ENCODE measurements at regions of chr16 and their contacts with region 1.

Region 1: DNA sequence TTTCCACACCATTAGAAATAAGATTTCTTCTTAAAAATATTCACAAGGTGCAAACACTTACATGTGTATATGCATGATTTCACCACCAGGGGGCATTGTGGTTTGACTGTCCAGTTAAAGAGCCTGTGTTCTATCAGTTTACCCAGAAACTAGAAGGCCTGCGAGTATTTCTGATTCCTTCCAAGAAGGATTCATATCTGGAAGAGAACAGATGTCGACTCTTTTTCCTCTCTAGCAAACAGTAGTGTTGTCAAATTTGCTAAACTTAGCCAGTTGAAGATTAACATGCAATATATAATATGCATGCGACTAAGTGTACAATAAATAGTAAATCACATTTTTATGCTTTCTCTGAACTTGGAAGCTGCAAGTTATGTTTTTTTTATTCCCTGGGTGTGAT is 404.1 kb downstream of the WWOX start:
- DNase-seq: peak; percentile 44 to 64
- H3K4me3 ChIP-seq: no peak overlapping the region
- H3K4me3 Mint-ChIP-seq: no peak overlapping the region
- H3K27ac Mint-ChIP-seq: no peak overlapping the region
- H3K4me1 ChIP-seq: peaks cover 25% of the 10 kb centered on the region
- H3K4me1 Mint-ChIP-seq: peaks cover 26% of the 10 kb centered on the region
- H3K27me3 ChIP-seq: no peaks in the 10 kb centered on the region
- H3K27me3 Mint-ChIP-seq: no peaks in the 10 kb centered on the region
- CTCF ChIP-seq: peak; percentile 70 to 88

Region 2: DNA sequence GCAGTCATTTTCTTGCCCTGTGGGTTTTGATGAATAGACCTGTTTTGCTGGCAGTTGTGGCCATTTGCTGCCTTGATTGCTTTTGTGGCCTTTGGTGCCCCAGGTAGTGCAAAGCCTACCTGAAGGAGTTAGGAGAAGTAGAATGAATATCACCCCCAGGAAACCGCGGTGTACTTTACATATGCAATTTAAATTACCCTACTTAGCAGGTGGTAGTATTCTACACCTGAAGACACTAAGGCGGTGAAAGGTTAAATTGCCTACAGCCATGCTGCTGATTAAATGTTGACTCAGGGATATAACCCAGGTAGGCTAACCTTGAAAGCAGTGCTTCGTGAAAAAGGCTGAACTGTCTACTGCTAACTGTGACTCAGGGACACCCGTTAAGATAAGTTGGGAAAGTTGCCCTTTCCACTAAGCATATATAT is 431.3 kb before region 1 on chr16:
- CTCF ChIA-PET with region 1: no interaction called
- POLR2A ChIA-PET with region 1: no interaction called
- intact Hi-C with region 1: no loop called
- DNase-seq: peak in 1 of 2 experiments; percentile 41
- H3K4me3 ChIP-seq: no peak overlapping the region
- H3K4me3 Mint-ChIP-seq: peak overlapping the region; percentile 43
- H3K27ac Mint-ChIP-seq: no peak overlapping the region
- H3K4me1 ChIP-seq: peaks cover 13% of the 10 kb centered on the region
- H3K4me1 Mint-ChIP-seq: peaks cover 7% of the 10 kb centered on the region
- H3K27me3 ChIP-seq: no peaks in the 10 kb centered on the region
- H3K27me3 Mint-ChIP-seq: no peaks in the 10 kb centered on the region
- CTCF ChIP-seq: no peak

Region 3: GRCh38 chr16:78472701-78473699 is 30.6 kb before region 1 on chr16:
- CTCF ChIA-PET with region 1: no interaction called
- POLR2A ChIA-PET with region 1: no interaction called
- intact Hi-C with region 1: no loop called
- DNase-seq: no peak
- H3K4me3 ChIP-seq: no peak overlapping the region
- H3K4me3 Mint-ChIP-seq: no peak overlapping the region
- H3K27ac Mint-ChIP-seq: no peak overlapping the region
- H3K4me1 ChIP-seq: no peaks in the 10 kb centered on the region
- H3K4me1 Mint-ChIP-seq: no peaks in the 10 kb centered on the region
- H3K27me3 ChIP-seq: no peaks in the 10 kb centered on the region
- H3K27me3 Mint-ChIP-seq: no peaks in the 10 kb centered on the region
- CTCF ChIP-seq: no peak

Region 4: DNA sequence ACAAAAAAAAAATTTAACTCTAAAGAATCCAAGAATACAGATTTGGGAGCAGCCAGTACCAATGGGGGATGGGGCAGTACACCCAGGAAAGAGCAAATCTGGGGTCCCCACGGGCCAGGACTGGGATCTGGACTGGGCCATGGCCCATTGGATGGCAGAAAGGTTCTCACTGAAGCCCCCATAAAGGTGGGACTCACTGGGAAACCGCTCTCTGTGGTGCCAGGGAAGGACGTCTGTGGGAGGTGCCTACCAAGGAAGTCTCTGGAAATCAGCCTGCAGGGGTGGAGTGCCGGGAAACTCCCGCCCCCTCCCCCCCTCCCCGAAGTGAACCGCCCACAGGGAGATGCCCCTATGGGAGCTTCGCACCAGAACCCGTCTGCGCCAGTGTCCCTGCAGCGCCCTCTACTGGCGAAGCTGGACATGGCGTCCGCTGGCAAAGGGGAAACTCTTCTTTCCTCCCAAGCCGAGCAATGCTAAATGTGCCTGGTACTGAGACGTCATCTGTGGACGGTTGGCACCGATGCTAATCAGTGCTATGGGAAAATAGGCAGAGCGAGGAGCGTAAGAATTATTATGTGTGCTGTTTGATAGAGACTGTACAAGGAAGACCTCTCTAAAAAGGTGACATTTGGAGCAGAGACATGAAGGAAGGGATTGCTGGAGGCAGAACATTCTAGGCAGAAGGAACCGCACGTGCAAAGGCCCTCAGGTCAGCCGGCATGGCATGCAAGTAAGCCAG is 266.9 kb after region 1 on chr16:
- CTCF ChIA-PET with region 1: no interaction called
- POLR2A ChIA-PET with region 1: no interaction called
- intact Hi-C with region 1: loop called (anchors 2 kb)
- DNase-seq: peak; percentile 61 to 71
- H3K4me3 ChIP-seq: no peak overlapping the region
- H3K4me3 Mint-ChIP-seq: no peak overlapping the region
- H3K27ac Mint-ChIP-seq: no peak overlapping the region
- H3K4me1 ChIP-seq: no peaks in the 10 kb centered on the region
- H3K4me1 Mint-ChIP-seq: no peaks in the 10 kb centered on the region
- H3K27me3 ChIP-seq: no peaks in the 10 kb centered on the region
- H3K27me3 Mint-ChIP-seq: no peaks in the 10 kb centered on the region
- CTCF ChIP-seq: peak; percentile 59 to 69

Region 5: GRCh38 chr16:79047229-79047983 is 543.8 kb after region 1 on chr16:
- CTCF ChIA-PET with region 1: no interaction called
- POLR2A ChIA-PET with region 1: no interaction called
- intact Hi-C with region 1: loop called (anchors 2 kb)
- DNase-seq: peak in 1 of 2 experiments; percentile 27
- H3K4me3 ChIP-seq: no peak overlapping the region
- H3K4me3 Mint-ChIP-seq: no peak overlapping the region
- H3K27ac Mint-ChIP-seq: no peak overlapping the region
- H3K4me1 ChIP-seq: no peaks in the 10 kb centered on the region
- H3K4me1 Mint-ChIP-seq: peaks cover 6% of the 10 kb centered on the region
- H3K27me3 ChIP-seq: no peaks in the 10 kb centered on the region
- H3K27me3 Mint-ChIP-seq: no peaks in the 10 kb centered on the region
- CTCF ChIP-seq: peak; percentile 53 to 78

Measured in Caco-2 (cell line).